Activated B cell treated with CpG ODN at 0.5 μM for 24 hours (primary cell): ENCODE measurements at regions of chr15 and their contacts with region 1.

Region 1: DNA sequence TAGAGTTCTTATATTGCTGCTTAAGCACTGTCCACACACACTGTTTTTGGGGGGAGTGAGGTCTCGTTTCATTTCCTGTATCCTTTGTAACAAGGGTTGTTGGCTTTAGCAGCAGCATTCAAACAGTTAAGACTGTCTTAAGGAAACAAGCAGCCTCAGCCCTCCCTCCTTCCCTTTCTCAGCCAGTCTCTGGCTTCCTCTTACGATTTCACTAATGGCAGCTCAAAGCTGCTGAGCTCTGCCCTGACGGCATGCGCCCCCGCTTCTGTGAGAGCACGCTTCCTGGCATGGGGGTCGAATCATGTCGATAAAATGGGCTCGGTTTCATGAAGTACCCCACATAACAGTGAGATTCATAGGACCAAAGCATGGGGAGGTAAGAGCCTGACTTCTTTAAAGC is 105.0 kb downstream of the KLHL25 start:
- DNase-seq: peak; percentile 46
- ATAC-seq: peak; percentile 59
- H3K4me3 Mint-ChIP-seq: peak overlapping the region; percentile 95
- H3K27ac Mint-ChIP-seq: peak overlapping the region; percentile 98
- H3K4me1 Mint-ChIP-seq: peaks cover 78% of the 10 kb centered on the region
- H3K27me3 Mint-ChIP-seq: no peaks in the 10 kb centered on the region
- CTCF ChIP-seq: no peak

Region 2: GRCh38 chr15:85312486-85312885 is 377.2 kb before region 1 on chr15:
- CTCF ChIA-PET with region 1: no interaction called
- POLR2A ChIA-PET with region 1: interaction called, 9 read pairs
- intact Hi-C with region 1: loop called (anchors 5 kb)
- DNase-seq: peak; percentile 53
- ATAC-seq: peak; percentile 89
- H3K4me3 Mint-ChIP-seq: peak overlapping the region; percentile 87
- H3K27ac Mint-ChIP-seq: peak overlapping the region; percentile 99
- H3K4me1 Mint-ChIP-seq: peaks cover 96% of the 10 kb centered on the region
- H3K27me3 Mint-ChIP-seq: no peaks in the 10 kb centered on the region
- CTCF ChIP-seq: no peak

Region 3: DNA sequence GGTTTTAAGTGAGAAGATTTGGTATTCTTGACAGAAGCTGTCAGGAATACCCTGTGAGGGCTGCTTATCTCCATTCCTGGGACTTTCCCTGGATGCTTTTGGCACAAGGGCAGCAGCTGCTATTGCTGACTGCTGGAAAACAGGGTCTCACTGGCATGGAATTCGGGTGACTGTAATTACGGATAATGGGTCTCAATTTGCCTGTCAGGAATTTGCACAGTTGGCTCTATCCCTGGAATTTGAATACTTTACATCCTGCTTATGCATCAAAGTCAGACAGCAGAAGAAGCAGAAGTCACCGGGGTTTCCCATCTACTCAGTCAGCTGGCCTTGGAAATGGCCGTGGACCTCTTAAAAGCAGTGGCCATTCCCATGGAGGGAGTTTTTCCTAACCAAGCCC is 335.3 kb before region 1 on chr15:
- CTCF ChIA-PET with region 1: no interaction called
- POLR2A ChIA-PET with region 1: no interaction called
- intact Hi-C with region 1: no loop called
- DNase-seq: no peak
- ATAC-seq: no peak
- H3K4me3 Mint-ChIP-seq: no peak overlapping the region
- H3K27ac Mint-ChIP-seq: no peak overlapping the region
- H3K4me1 Mint-ChIP-seq: peaks cover 8% of the 10 kb centered on the region
- H3K27me3 Mint-ChIP-seq: no peaks in the 10 kb centered on the region
- CTCF ChIP-seq: no peak

Region 4: GRCh38 chr15:85534031-85534430 is 155.7 kb before region 1 on chr15:
- CTCF ChIA-PET with region 1: no interaction called
- POLR2A ChIA-PET with region 1: interaction called, 3 read pairs
- intact Hi-C with region 1: loop called (anchors 2 kb)
- DNase-seq: no peak
- ATAC-seq: peak; percentile 77
- H3K4me3 Mint-ChIP-seq: peak overlapping the region; percentile 63
- H3K27ac Mint-ChIP-seq: peak overlapping the region; percentile 87
- H3K4me1 Mint-ChIP-seq: peaks cover 84% of the 10 kb centered on the region
- H3K27me3 Mint-ChIP-seq: no peaks in the 10 kb centered on the region
- CTCF ChIP-seq: no peak

Region 5: DNA sequence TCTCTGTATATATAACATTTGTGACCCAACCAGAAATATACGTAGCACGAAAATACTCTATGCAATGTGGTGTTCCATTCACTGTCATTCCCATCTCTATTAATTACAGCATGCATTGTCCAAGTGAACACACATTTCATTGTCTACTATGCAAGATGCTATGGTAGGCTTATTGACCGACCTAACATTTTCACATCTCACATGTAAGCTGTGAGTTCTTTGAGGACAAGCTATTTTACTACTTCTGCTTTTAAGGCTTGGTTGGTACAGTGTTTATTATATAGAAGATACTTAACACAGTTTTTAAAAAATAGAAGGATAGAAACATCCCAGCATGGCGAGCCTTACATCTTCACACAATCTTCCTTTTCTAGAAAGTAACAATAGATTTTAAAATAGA is 59.4 kb before region 1 on chr15:
- CTCF ChIA-PET with region 1: no interaction called
- POLR2A ChIA-PET with region 1: no interaction called
- intact Hi-C with region 1: no loop called
- DNase-seq: no peak
- ATAC-seq: no peak
- H3K4me3 Mint-ChIP-seq: no peak overlapping the region
- H3K27ac Mint-ChIP-seq: no peak overlapping the region
- H3K4me1 Mint-ChIP-seq: peaks cover 31% of the 10 kb centered on the region
- H3K27me3 Mint-ChIP-seq: no peaks in the 10 kb centered on the region
- CTCF ChIP-seq: no peak

Region 6: DNA sequence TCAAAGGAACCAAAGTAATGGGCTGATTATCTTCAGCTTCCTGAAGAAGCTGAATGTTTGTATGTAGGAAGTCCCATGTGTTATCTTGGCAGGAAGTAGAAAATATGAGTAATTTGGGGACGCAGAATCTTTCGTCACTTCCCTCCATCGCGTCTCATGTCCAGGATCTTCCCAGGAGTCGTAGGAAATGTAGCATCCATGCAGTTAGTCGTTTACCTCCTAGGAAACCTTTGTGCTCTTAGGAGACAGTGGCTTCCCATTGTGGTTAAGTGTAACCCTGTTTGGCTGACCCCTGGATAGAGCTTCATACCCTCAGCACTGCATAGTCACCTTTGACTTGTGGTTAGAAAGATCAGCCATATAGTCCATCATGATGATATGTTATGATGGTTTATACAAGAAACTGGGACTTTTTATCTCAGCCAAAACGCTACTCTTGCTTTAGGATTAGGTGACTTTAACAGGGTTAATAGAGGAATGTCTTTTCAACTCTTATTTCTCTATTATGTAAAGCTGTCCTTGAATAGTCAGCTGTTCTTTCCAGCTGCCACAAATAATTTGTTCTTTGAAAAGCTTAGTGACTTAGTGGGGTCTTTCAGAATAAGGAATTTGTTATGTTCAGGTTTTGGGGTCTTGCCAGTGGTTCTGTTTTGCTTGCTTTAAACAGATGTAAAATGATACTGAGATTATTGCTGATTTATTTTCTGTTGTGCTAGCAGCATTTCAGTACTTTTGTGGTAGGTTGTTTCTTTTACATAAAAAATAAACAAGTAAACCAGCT is 12.8 kb after region 1 on chr15:
- CTCF ChIA-PET with region 1: interaction called, 7 read pairs
- POLR2A ChIA-PET with region 1: interaction called, 298 read pairs
- intact Hi-C with region 1: loop called (anchors 1 kb)
- DNase-seq: no peak
- ATAC-seq: no peak
- H3K4me3 Mint-ChIP-seq: peak overlapping the region; percentile 61
- H3K27ac Mint-ChIP-seq: peak overlapping the region; percentile 89
- H3K4me1 Mint-ChIP-seq: peaks cover 76% of the 10 kb centered on the region
- H3K27me3 Mint-ChIP-seq: no peaks in the 10 kb centered on the region
- CTCF ChIP-seq: no peak

Region 7: DNA sequence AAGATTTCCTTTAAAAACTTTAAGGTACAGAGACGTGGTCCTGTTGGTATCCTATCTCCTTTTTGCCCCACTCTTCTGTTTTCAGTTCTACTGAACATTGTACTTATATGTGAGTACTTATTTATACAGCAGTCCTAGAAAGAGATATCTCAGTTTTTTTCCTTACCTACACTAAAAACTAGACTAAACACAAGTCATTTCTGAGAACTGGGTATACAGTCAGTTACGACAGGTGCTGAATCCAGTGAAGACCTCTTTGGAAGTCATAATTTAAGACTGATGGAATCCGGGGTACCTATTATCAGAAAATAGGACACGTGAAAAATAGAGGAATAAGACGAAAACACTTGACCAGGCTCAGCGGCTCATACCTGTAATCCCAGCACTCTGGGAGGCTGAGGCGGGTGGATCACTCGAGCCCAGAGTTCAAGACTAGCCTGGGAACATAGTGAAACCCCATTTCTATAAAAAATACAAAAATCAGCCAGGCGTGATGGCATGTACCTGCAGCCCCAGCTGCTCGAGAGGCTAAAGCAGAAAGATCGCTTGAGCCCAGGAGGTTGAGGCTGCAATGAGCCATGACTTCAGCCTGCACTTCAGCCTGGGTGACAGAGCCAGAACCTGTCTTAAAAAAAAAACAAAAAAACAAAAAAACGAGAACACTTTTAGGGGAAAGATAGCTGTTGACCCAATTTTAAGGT is 28.7 kb after region 1 on chr15:
- CTCF ChIA-PET with region 1: no interaction called
- POLR2A ChIA-PET with region 1: interaction called, 49 read pairs
- intact Hi-C with region 1: loop called (anchors 5 kb)
- DNase-seq: no peak
- ATAC-seq: peak; percentile 61
- H3K4me3 Mint-ChIP-seq: no peak overlapping the region
- H3K27ac Mint-ChIP-seq: peak overlapping the region; percentile 81
- H3K4me1 Mint-ChIP-seq: peaks cover 49% of the 10 kb centered on the region
- H3K27me3 Mint-ChIP-seq: no peaks in the 10 kb centered on the region
- CTCF ChIP-seq: no peak

Region 8: GRCh38 chr15:85920956-85921355 is 231.2 kb after region 1 on chr15:
- CTCF ChIA-PET with region 1: no interaction called
- POLR2A ChIA-PET with region 1: no interaction called
- intact Hi-C with region 1: no loop called
- DNase-seq: no peak
- ATAC-seq: no peak
- H3K4me3 Mint-ChIP-seq: no peak overlapping the region
- H3K27ac Mint-ChIP-seq: no peak overlapping the region
- H3K4me1 Mint-ChIP-seq: no peaks in the 10 kb centered on the region
- H3K27me3 Mint-ChIP-seq: peaks cover 4% of the 10 kb centered on the region
- CTCF ChIP-seq: no peak

Region 9: DNA sequence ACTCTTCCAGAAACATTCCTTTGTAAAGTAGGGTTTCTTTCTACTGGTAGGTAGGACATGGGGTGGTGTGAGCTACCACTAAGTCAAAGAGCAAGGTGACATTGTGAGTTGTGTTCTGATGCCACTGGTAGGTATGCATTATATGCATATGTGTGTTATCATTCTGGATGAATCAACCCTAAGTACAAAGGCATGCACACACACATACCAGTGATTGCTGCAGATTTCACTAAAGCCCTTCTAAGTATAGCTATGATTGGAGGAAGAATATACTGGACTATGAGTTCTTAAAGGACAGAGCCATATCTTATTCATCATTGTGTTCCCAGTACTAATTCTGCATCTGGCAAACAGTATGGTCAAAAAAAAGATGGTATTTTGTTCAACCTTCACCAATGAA is 1035.9 kb after region 1 on chr15:
- CTCF ChIA-PET with region 1: no interaction called
- POLR2A ChIA-PET with region 1: no interaction called
- intact Hi-C with region 1: no loop called
- DNase-seq: no peak
- ATAC-seq: no peak
- H3K4me3 Mint-ChIP-seq: no peak overlapping the region
- H3K27ac Mint-ChIP-seq: no peak overlapping the region
- H3K4me1 Mint-ChIP-seq: no peaks in the 10 kb centered on the region
- H3K27me3 Mint-ChIP-seq: no peaks in the 10 kb centered on the region
- CTCF ChIP-seq: no peak